ENCODE measurements at regions of chr16 and their contacts with region 1.

Region 1: GRCh38 chr16:28823872-28824716 is 1.3 kb downstream of the ATXN2L start:
- DNase-seq: peak; percentile 96 to 99
- ATAC-seq: peak; percentile 82 to 93
- H3K4me3 ChIP-seq: peak overlapping the region; percentile 100
- H3K27ac ChIP-seq: peak overlapping the region; percentile 95 to 100
- H3K4me1 ChIP-seq: peaks cover 37% of the 10 kb centered on the region
- CTCF ChIP-seq: no peak
- EP300 ChIP-seq: no peak
- POLR2A ChIP-seq: peak; percentile 32
- RAD21 ChIP-seq: no peak

Region 2: GRCh38 chr16:28597692-28598261 is 226.3 kb before region 1 on chr16:
- CTCF ChIA-PET with region 1: no interaction called
- POLR2A ChIA-PET with region 1: no interaction called
- DNase-seq: peak in 1 of 2 experiments; percentile 16
- ATAC-seq: peak in 1 of 2 experiments; percentile 30; a peak in 2 of 6 replicates
- H3K4me3 ChIP-seq: no peak overlapping the region
- H3K27ac ChIP-seq: no peak overlapping the region
- H3K4me1 ChIP-seq: peaks cover 7% of the 10 kb centered on the region; the same call in 2 of the 3 replicates
- CTCF ChIP-seq: no peak
- EP300 ChIP-seq: no peak
- POLR2A ChIP-seq: no peak
- RAD21 ChIP-seq: no peak

Region 3: DNA sequence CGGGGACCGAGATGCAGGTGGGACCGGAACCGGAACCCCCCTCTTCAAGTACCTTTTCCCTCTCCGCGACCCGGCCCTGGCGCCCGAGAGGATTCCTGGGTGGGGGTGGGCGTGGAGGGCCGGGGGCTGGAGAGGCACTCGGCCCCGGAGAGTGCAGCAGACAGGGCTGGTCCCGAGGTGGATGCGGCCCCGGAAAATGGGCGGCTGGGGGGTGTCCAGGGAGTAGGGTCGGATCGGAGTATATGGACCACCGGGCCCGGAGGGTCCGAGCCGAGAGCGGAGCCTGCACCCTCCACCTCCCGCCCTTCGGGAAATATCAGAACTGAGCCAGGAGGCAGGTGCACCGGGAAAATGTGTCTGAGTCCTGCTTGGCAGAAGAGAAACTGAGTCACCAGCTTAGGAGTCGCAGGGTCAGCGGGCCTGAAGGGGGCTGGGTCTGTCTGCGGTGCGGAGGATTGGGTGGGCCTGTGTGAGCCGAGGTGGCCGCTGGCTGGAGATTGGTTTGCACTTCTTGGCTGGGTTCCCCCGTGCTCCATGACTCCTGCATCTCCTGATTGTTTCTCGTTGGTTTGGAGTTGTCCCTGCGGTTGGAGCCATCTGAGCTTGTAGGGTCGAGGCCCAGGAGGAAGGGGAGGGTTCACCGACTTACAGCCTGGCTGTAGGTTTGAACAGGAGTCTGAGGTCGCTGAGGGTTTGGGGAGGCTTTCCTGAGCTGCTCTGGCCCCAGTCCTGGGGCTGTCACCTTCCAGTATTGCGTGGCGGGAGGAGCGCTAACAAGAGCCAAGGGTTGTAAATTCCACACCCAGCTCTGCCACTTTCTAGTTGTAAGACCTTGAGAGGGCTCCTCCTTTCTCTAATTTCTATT is 40.1 kb after region 1 on chr16:
- CTCF ChIA-PET with region 1: interaction called, 3 read pairs
- POLR2A ChIA-PET with region 1: interaction called, 15 read pairs
- DNase-seq: no peak
- ATAC-seq: peak; percentile 13 to 14; a peak in 3 of 6 replicates
- H3K4me3 ChIP-seq: peak overlapping the region; percentile 99
- H3K27ac ChIP-seq: peak overlapping the region; percentile 93 to 98
- H3K4me1 ChIP-seq: peaks cover 10% of the 10 kb centered on the region; the same call in 2 of the 3 replicates
- CTCF ChIP-seq: no peak
- EP300 ChIP-seq: no peak
- POLR2A ChIP-seq: no peak
- RAD21 ChIP-seq: no peak